ENCODE measurements at regions of chr20 and their contacts with region 1.

Region 1: GRCh38 chr20:63537525-63538203 is 488 bp upstream of the PTK6 start:
- DNase-seq: peak; percentile 98
- H3K4me3 Mint-ChIP-seq: peak overlapping the region; percentile 83
- H3K27ac Mint-ChIP-seq: peak overlapping the region; percentile 91
- H3K4me1 Mint-ChIP-seq: peaks cover 12% of the 10 kb centered on the region
- H3K27me3 Mint-ChIP-seq: no peaks in the 10 kb centered on the region

Region 2: GRCh38 chr20:63553227-63553932 is 15.7 kb after region 1 on chr20:
- intact Hi-C with region 1: loop called (anchors 1 kb)
- DNase-seq: peak; percentile 97
- H3K4me3 Mint-ChIP-seq: peak overlapping the region; percentile 77
- H3K27ac Mint-ChIP-seq: peak overlapping the region; percentile 76
- H3K4me1 Mint-ChIP-seq: peaks cover 12% of the 10 kb centered on the region
- H3K27me3 Mint-ChIP-seq: peaks cover 15% of the 10 kb centered on the region

Region 3: DNA sequence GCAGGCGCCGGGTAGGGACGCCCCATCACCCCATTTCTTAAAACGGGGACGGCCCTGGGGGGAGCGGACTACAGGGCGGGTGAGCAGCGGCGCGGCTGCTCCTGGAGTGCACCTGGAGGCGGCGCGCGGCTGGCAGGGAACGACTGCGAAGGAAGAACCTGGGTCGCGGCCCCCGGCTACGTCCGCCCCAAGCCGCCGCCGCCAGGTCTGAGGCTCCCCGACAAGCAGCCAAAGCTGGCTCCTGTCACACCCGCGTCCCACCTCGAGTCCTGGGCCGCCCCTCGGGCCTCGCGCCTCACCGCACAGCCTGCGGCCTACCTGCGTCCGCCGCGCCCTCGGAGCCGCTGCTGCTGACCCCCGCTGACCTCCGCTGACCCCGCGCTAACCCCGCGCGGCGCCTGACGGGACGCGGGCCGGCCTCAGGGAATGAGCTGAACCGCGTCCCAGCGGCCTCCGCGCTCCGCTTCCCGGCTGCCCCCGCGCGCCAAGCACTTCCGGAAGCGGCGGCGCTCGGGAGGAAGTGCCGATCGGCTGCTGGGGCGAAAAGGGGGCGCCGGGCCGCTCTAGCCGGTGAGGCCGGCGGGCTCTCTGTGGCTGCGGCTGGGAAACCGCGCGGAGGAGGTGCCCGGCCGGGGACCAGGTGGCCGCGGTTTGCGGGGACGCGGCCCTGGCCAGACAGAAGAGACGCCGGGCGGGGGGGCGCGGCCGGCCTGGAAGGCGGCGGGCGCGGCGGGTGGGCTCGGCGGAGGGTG is 170.1 kb after region 1 on chr20 and contains the starts of genes ARFRP1 and ZGPAT:
- intact Hi-C with region 1: loop called (anchors 2 kb)
- DNase-seq: peak; percentile 97
- H3K4me3 Mint-ChIP-seq: peak within 1 kb of the TSS; percentile 95
- H3K27ac Mint-ChIP-seq: peak within 1 kb of the TSS; percentile 84
- H3K4me1 Mint-ChIP-seq: peaks cover 27% of the 10 kb centered on the region
- H3K27me3 Mint-ChIP-seq: no peaks in the 10 kb centered on the region
- total RNA-seq, gene ARFRP1: 63.4 and 70.4 TPM in 2 replicates
- total RNA-seq, gene ZGPAT: 37.3 and 38.1 TPM in 2 replicates

Region 4: GRCh38 chr20:63864847-63865640 is 327.4 kb after region 1 on chr20 and contains the start of gene TPD52L2:
- intact Hi-C with region 1: loop called (anchors 2 kb)
- DNase-seq: peak; percentile 99
- H3K4me3 Mint-ChIP-seq: peak within 1 kb of the TSS; percentile 87
- H3K27ac Mint-ChIP-seq: peak within 1 kb of the TSS; percentile 100
- H3K4me1 Mint-ChIP-seq: peaks cover 25% of the 10 kb centered on the region
- H3K27me3 Mint-ChIP-seq: no peaks in the 10 kb centered on the region
- total RNA-seq, gene TPD52L2: 75.9 and 78.8 TPM in 2 replicates

Region 5: DNA sequence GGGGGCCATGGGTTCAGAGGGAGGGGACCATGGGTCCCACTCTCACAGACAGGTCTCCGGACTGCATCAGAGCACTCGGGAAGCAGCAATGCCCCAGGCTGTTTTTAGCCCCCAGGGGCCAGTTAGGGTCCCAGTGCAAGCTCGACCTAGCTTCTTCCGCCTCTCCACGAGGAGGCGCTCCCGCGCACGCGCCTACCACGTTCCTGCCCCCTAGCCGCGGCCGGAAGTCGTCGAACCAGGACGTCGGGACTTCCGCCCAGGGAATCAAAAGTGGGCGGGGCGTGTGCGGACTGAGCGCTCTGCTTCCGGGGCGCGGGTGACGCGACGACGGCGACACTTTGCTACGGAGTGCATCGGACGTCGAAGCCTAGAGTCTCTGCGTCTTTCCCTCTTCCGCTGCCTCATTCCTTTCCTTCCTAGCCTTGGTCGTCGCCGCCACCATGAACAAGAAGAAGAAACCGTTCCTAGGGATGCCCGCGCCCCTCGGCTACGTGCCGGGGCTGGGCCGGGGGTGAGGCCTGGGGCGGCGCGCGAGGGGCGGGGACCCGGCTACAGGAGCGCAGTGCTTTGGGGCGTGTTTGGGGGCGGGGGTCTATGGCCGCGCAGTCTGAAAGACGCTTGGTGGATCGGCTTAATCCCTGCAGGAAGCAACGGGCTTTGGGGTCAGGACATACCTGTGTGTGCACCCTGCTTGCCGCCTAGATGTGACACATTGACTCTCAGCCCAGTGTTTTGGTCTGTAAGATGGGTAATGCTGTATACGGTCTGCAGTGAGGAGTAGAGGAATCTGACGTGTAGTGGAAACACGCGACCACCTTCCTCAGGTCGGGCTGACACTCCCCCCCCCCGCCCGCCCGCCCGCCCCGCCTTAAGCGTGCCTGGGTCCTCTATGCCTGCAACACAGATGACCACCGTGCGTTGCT is 443.4 kb after region 1 on chr20 and contains the start of gene PRPF6:
- intact Hi-C with region 1: loop called (anchors 5 kb)
- DNase-seq: peak; percentile 99
- H3K4me3 Mint-ChIP-seq: peak within 1 kb of the TSS; percentile 99
- H3K27ac Mint-ChIP-seq: peak within 1 kb of the TSS; percentile 100
- H3K4me1 Mint-ChIP-seq: peaks cover 58% of the 10 kb centered on the region
- H3K27me3 Mint-ChIP-seq: no peaks in the 10 kb centered on the region
- total RNA-seq, gene PRPF6: 79.5 and 81.3 TPM in 2 replicates

Region 6: DNA sequence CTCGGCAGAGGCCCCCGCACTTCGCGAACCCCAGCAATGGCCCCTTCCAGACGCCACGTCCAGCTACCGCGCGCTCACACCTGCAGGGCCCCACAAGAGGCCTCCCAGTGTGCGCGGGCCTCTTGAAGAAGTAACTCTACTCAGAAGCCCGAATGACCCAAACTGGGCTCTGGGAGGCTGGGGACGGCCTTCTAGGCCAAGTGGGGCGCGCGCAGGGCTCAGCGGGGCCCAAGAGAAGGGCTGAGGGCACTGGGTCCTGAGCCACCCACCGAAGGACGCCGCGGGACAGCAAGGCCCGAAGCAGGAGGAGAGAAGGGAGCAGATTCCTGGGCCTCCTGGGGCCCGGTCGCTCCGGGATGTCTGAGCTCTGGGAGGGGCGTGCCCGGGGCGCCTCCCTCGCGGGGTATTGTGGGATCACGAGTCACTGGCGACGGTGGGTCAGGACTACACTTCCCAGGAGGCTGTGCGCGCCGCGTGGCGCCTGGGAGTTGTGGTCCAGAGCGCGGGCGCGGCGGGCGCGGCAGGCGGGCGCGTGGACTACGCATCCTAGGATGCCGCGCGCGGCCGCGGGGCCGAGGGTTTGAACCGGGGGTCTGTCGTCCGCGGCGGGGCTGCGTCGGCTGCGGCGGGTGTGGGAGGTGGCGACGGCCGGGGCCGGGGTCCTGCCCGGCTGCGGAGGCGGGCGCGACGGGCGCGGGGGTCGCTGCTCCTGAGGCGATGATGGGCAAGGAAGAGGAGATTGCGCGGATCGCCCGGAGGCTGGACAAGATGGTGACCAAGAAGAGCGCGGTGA is 525.1 kb after region 1 on chr20 and contains the start of gene TCEA2:
- intact Hi-C with region 1: loop called (anchors 5 kb)
- DNase-seq: peak; percentile 99
- H3K4me3 Mint-ChIP-seq: peak within 1 kb of the TSS; percentile 95
- H3K27ac Mint-ChIP-seq: peak within 1 kb of the TSS; percentile 91
- H3K4me1 Mint-ChIP-seq: peaks cover 54% of the 10 kb centered on the region
- H3K27me3 Mint-ChIP-seq: no peaks in the 10 kb centered on the region
- total RNA-seq, gene TCEA2: 35.4 and 36.8 TPM in 2 replicates